ENCODE measurements at regions of chr3 and their contacts with region 1.

Region 1: GRCh38 chr3:88058591-88059368 is at the starts of genes CGGBP1 and ZNF654:
- DNase-seq: peak; percentile 98 to 99 (median 99)
- ATAC-seq: peak; percentile 88
- H3K4me3 ChIP-seq: peak within 1 kb of the TSS; percentile 97 to 98
- H3K4me3 Mint-ChIP-seq: peak within 1 kb of the TSS; percentile 93
- H3K27ac ChIP-seq: peak within 1 kb of the TSS; percentile 81 to 94
- H3K27ac Mint-ChIP-seq: peak within 1 kb of the TSS; percentile 99
- H3K4me1 ChIP-seq: peaks cover 46% of the 10 kb centered on the region
- H3K4me1 Mint-ChIP-seq: peaks cover 64% of the 10 kb centered on the region
- H3K27me3 ChIP-seq: no peaks in the 10 kb centered on the region
- H3K27me3 Mint-ChIP-seq: no peaks in the 10 kb centered on the region
- CTCF ChIP-seq: no peak
- total RNA-seq, gene CGGBP1: 64.1 to 66.7 TPM
- total RNA-seq, gene ZNF654: 13.2 to 15.0 TPM

Region 2: GRCh38 chr3:87227104-87227834 is 831.5 kb before region 1 on chr3 and contains the start of gene CHMP2B:
- CTCF ChIA-PET with region 1: no interaction called
- POLR2A ChIA-PET with region 1: interaction called, 8 read pairs
- intact Hi-C with region 1: loop called (anchors 1 to 5 kb)
- DNase-seq: peak; percentile 83 to 95 (median 92)
- ATAC-seq: peak; percentile 87
- H3K4me3 ChIP-seq: peak within 1 kb of the TSS; percentile 88 to 92
- H3K4me3 Mint-ChIP-seq: peak within 1 kb of the TSS; percentile 96
- H3K27ac ChIP-seq: peak within 1 kb of the TSS; percentile 83 to 88
- H3K27ac Mint-ChIP-seq: peak within 1 kb of the TSS; percentile 95
- H3K4me1 ChIP-seq: peaks cover 27% of the 10 kb centered on the region
- H3K4me1 Mint-ChIP-seq: peaks cover 49% of the 10 kb centered on the region
- H3K27me3 ChIP-seq: no peaks in the 10 kb centered on the region
- H3K27me3 Mint-ChIP-seq: peaks cover 6% of the 10 kb centered on the region
- CTCF ChIP-seq: no peak
- total RNA-seq, gene CHMP2B: 32.4 to 35.8 TPM

Region 3: GRCh38 chr3:88019024-88019423 is 39.8 kb before region 1 on chr3:
- CTCF ChIA-PET with region 1: no interaction called
- POLR2A ChIA-PET with region 1: interaction called, 3 read pairs
- intact Hi-C with region 1: loop called in 1 of 2 experiments (anchors 5 kb)
- DNase-seq: peak in 2 of 9 experiments; percentile 57 to 74
- ATAC-seq: peak; percentile 65
- H3K4me3 ChIP-seq: no peak overlapping the region
- H3K4me3 Mint-ChIP-seq: no peak overlapping the region
- H3K27ac ChIP-seq: no peak overlapping the region
- H3K27ac Mint-ChIP-seq: no peak overlapping the region
- H3K4me1 ChIP-seq: peaks cover 4% of the 10 kb centered on the region
- H3K4me1 Mint-ChIP-seq: peaks cover 9% of the 10 kb centered on the region
- H3K27me3 ChIP-seq: no peaks in the 10 kb centered on the region
- H3K27me3 Mint-ChIP-seq: no peaks in the 10 kb centered on the region
- CTCF ChIP-seq: no peak

Region 4: GRCh38 chr3:88075072-88075471 is 16.3 kb after region 1 on chr3:
- CTCF ChIA-PET with region 1: no interaction called
- POLR2A ChIA-PET with region 1: interaction called, 15 read pairs
- intact Hi-C with region 1: no loop called
- DNase-seq: no peak
- ATAC-seq: no peak
- H3K4me3 ChIP-seq: no peak overlapping the region
- H3K4me3 Mint-ChIP-seq: no peak overlapping the region
- H3K27ac ChIP-seq: no peak overlapping the region
- H3K27ac Mint-ChIP-seq: no peak overlapping the region
- H3K4me1 ChIP-seq: peaks cover 7% of the 10 kb centered on the region
- H3K4me1 Mint-ChIP-seq: peaks cover 71% of the 10 kb centered on the region
- H3K27me3 ChIP-seq: no peaks in the 10 kb centered on the region
- H3K27me3 Mint-ChIP-seq: no peaks in the 10 kb centered on the region
- CTCF ChIP-seq: no peak

Region 5: DNA sequence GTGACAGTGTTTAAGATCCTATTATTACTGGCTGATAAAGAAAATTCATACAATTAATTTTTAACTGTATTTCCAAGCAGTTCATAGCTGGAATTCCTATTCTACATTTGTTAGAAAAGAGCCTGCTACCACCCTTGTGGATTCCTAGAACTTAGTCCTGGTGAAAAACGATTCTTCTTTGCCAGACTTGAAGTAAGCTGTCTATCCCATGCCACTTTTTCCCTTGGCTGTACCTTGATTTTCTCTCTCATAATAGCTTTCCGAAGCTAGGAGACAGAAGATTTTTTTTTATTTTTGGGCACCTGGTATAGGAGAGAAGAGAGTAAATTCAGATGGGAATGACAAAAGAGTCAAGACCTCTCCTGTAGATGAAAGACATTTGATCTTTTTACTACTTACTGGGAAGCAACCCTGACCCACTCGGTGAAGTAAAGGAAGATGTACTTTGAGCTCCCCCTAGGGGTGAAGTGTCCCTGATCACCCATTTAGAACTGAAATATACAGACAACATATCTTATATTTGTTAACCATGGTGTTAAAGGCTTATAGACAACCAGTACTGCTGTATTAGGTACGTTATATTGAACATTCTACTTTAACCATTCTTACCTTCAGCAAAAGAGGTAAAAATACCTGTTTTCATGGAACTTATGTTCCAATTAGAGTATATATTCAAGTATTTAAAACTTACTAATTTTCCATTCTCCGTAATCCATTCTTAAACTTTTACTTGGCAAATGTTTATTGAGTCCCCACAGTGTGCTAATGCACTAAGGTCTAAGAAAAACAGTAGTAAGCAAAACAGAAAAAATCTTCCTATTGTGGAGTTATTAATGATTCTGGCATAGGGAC is 54.8 kb after region 1 on chr3:
- CTCF ChIA-PET with region 1: interaction called, 6 read pairs
- POLR2A ChIA-PET with region 1: interaction called, 5 read pairs
- intact Hi-C with region 1: loop called (anchors 2 to 5 kb)
- DNase-seq: peak; percentile 6 to 80 (median 55)
- ATAC-seq: peak; percentile 90
- H3K4me3 ChIP-seq: no peak overlapping the region
- H3K4me3 Mint-ChIP-seq: no peak overlapping the region
- H3K27ac ChIP-seq: no peak overlapping the region
- H3K27ac Mint-ChIP-seq: peak overlapping the region; percentile 28
- H3K4me1 ChIP-seq: no peaks in the 10 kb centered on the region
- H3K4me1 Mint-ChIP-seq: peaks cover 24% of the 10 kb centered on the region
- H3K27me3 ChIP-seq: no peaks in the 10 kb centered on the region
- H3K27me3 Mint-ChIP-seq: no peaks in the 10 kb centered on the region
- CTCF ChIP-seq: peak; percentile 71

Measured in CD8-positive, alpha-beta T cell (primary cell).